Right ventricle myocardium inferior (tissue), 1 donor: ENCODE measurements at regions of chr10 and their contacts with region 1.

Region 1: GRCh38 chr10:87094373-87095235 is at the starts of genes GLUD1 and SHLD2:
- DNase-seq: peak; percentile 97
- ATAC-seq: peak; percentile 87
- total RNA-seq, gene GLUD1: 104 TPM
- total RNA-seq, gene SHLD2: 13.5 TPM

Region 2: DNA sequence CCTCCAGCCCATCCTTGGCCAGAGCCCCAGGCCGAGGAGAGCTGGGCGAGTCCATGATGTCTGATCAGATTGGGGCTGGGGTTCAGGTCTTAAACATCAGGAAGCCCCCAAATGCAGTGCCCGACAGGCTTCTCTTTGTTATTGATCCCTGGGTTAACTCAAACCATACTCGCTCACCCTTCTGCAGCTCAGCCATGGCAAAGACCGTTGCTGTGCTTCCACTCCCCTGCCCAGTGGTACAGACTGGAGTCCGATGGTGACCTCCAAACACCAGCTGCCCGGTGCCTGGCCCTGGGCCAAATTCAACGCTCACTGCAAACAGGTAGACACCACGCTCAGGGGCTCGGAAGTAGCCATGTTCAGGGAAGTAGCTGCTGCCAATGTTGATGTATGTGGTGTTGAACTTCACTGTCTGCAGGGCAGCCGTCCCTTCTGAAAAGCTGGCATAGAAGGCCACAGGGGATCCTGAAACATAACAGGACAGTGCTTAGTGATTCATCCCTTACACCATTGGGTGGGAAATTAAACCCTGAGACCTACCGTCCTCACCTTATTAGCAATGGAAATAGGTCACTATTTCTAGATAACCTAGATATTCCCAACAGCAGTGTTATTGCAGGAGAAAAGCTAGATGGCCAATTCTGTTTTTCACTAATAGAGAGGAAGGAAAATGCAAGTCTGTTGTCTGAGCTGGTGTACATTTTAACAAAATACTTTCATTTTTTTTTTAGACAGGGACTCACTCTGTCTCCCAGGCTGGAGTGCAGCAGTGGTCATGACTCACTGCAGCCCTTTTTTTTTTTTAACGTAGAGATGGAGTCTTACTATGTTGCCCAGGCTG is 157.7 kb before region 1 on chr10:
- intact Hi-C with region 1: loop called (anchors 5 kb)
- DNase-seq: peak; percentile 71
- ATAC-seq: no peak

Region 3: GRCh38 chr10:87054373-87055295 is 40.0 kb before region 1 on chr10:
- intact Hi-C with region 1: loop called (anchors 5 kb)
- DNase-seq: no peak
- ATAC-seq: peak; percentile 45

Region 4: DNA sequence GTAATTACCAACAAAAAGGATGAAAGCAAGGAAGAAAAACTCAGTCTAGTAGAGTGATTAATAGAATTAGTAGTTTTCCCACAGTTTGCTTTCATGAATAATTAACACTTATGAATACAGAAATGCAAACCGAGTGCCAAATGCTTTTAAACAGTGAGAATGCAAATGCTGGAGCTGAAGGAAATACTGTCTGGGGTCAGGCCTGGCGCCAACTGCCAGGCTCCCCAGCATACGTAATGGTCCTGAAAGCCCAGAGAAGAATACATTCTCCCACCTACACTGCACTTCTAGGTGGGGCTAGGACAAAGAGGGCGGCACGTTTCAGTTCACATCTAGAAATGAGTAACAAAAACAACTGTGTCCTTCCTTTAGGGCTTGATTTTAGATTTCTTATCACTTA is 30.0 kb before region 1 on chr10:
- intact Hi-C with region 1: no loop called
- DNase-seq: no peak
- ATAC-seq: no peak